A549 (cell line): ENCODE measurements at regions of chr15 and their contacts with region 1.

Region 1: DNA sequence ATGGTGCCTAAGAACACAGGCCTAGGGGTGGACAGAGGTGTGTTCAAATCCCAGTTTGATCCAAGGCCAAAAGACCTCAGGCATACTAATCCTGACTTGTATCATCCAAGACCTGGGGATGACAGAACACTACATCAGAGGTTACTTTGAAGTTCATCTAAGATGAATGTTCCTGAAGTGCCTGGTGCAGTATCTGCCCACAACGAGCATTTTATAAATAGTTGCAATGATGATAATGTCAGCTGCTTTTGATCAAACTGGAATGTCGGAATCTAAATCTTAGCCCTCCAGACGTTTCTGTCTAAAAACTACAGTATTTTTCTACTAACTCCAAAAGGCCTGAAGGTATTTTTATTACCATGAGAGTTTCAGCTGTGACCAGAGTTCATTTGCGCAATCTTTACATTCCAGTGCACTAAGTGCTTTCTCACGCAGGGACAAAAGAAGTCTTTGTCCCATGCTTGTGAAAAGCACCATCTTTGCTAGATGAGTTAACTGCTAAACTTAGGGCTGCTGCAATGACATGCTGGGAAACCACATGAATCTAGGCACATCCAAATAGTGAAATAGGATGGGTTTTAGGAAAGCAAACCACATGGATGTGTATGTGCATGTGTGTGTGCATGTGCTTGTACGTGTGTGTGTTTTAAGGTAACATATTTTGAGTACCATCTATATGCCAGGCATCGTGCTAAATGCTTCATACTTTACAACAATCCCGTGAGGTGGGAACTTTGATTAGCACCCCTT is 18.1 kb downstream of the ANXA2 start:
- DNase-seq: peak in 1 of 2 experiments; percentile 95
- ATAC-seq: peak; percentile 40 to 41
- H3K4me3 ChIP-seq: peak overlapping the region; percentile 20
- H3K27ac ChIP-seq: peak overlapping the region; percentile 90
- H3K4me1 ChIP-seq: peaks cover 99% of the 10 kb centered on the region
- CTCF ChIP-seq: no peak
- EP300 ChIP-seq: peak; percentile 95 to 98
- POLR2A ChIP-seq: no peak
- RAD21 ChIP-seq: no peak; a peak in 4 of 5 replicates

Region 2: GRCh38 chr15:60390871-60391501 is 11.3 kb after region 1 on chr15:
- CTCF ChIA-PET with region 1: interaction called, 19 read pairs
- POLR2A ChIA-PET with region 1: interaction called, 152 read pairs
- DNase-seq: peak in 1 of 2 experiments; percentile 82
- ATAC-seq: peak; percentile 33 to 46
- H3K4me3 ChIP-seq: peak overlapping the region; percentile 35
- H3K27ac ChIP-seq: peak overlapping the region; percentile 97 to 99
- H3K4me1 ChIP-seq: peaks cover 88% of the 10 kb centered on the region
- CTCF ChIP-seq: peak; percentile 30; the same call in 1 of the 3 replicates
- EP300 ChIP-seq: no peak
- POLR2A ChIP-seq: no peak
- RAD21 ChIP-seq: peak; percentile 24 to 56; a peak in 4 of 5 replicates